ENCODE measurements at regions of chr19 and their contacts with region 1.

Region 1: DNA sequence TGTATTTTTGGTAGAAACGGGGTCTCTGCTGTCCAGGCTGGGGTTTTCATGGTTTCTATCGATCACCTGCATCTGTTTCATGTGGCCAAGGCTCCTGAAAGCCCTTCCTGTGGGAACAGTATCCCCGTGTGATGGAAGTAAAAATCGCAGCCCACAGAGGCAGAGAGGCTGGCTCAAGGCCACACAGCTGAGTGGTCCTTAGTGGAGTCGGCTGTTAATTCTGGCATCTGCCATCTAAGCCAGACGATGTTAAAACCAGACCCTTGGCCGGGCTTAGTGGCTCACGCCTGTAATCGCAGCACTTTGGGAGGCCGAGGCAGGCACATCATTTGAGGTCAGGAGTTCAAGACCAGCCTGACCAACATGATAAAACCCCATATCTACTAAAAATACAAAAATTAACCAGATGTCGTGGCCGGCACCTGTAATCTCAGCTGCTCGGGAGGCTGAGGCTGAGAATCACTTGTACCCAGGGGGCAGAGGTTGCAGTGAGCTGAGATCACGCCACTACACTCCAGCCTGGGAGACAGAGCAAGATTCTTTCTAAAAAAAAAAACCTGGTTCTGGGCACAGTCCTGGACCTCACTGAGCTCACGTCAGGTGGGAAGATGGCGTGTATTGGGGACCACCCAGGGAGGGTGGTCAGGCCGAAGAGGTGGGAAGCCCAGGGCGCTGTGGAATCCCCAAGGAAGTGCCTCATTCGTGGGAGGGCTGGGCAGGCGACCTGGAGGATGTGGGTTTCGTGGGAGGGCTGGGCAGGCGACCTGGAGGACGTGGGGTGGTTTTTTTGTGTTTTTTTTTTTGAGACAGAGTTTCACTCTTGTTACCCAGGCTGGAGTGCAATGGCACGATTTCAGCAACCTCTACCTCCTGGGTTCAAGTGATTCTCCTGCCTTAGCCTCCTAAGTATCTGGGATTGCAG is 18.5 kb upstream of the MISP start:
- DNase-seq: no peak
- H3K4me3 ChIP-seq: no peak overlapping the region
- H3K27ac ChIP-seq: no peak overlapping the region
- H3K4me1 ChIP-seq: peaks cover 9 to 22% (median 17%) of the 10 kb centered on the region in 4 donors
- H3K27me3 ChIP-seq: no peaks in the 10 kb centered on the region
- CTCF ChIP-seq: no peak
- EP300 ChIP-seq: no peak
- POLR2A ChIP-seq: no peak

Region 2: DNA sequence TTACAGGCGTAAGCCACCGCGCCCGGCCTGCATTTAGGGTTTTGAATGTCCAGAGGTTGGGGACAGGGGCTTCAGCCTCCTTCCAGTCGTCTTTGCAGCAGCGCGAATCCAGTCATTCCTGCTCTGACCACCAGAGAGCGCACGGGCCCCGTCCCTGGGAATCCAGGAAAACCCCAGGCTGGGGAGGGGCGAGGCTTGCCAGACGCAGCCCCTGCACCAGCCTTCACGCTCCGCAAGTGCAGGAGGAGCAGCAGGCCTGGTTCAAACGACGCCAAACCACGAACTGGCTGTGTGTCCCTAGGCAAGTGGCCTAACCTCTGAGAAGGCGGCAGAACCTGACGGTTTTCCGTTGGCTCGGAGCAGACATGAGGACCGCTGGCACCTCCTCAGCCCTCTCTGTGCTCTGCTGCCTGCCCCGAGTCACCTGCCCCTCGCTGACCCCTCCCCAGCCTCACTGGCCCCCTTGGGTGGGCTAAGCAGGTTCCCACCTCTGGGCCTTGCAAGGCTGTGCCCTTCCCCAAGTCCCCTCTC is 67.4 kb before region 1 on chr19:
- intact Hi-C with region 1: loop called (anchors 1 kb)
- DNase-seq: no peak
- H3K4me3 ChIP-seq: peak overlapping the region; percentile 26 to 51 (median 41)
- H3K27ac ChIP-seq: peak overlapping the region; percentile 10 to 46 (median 20)
- H3K4me1 ChIP-seq: peaks cover 38 to 48% (median 46%) of the 10 kb centered on the region in 4 donors
- H3K27me3 ChIP-seq: no peaks in the 10 kb centered on the region
- CTCF ChIP-seq: peak; percentile 92 to 99 (median 97)
- EP300 ChIP-seq: no peak
- POLR2A ChIP-seq: no peak

Region 3: GRCh38 chr19:708154-709143 is 24.0 kb before region 1 on chr19 and contains the start of gene PALM:
- intact Hi-C with region 1: loop called (anchors 2 kb)
- DNase-seq: no peak
- H3K4me3 ChIP-seq: peak within 1 kb of the TSS; percentile 76 to 95 (median 84)
- H3K27ac ChIP-seq: peak within 1 kb of the TSS; percentile 81 to 86 (median 84)
- H3K4me1 ChIP-seq: peaks cover 27 to 55% (median 46%) of the 10 kb centered on the region in 4 donors
- H3K27me3 ChIP-seq: peaks cover 0 to 23% (median 2%) of the 10 kb centered on the region in 4 donors
- CTCF ChIP-seq: peak in 2 of 3 experiments; percentile 34 to 45
- EP300 ChIP-seq: no peak
- POLR2A ChIP-seq: no peak
- total RNA-seq, gene PALM: 42.8 to 119 (median 70.8) TPM

Measured in esophagus muscularis mucosa (tissue), 4 donors.